Lower leg skin (tissue), 4 donors: ENCODE measurements at regions of chr5 and their contacts with region 1.

Region 1: GRCh38 chr5:14569948-14570711 is 11.5 kb upstream of the OTULINL start:
- DNase-seq: no peak
- H3K4me3 ChIP-seq: no peak overlapping the region
- CTCF ChIP-seq: no peak
- POLR2A ChIP-seq: no peak

Region 2: DNA sequence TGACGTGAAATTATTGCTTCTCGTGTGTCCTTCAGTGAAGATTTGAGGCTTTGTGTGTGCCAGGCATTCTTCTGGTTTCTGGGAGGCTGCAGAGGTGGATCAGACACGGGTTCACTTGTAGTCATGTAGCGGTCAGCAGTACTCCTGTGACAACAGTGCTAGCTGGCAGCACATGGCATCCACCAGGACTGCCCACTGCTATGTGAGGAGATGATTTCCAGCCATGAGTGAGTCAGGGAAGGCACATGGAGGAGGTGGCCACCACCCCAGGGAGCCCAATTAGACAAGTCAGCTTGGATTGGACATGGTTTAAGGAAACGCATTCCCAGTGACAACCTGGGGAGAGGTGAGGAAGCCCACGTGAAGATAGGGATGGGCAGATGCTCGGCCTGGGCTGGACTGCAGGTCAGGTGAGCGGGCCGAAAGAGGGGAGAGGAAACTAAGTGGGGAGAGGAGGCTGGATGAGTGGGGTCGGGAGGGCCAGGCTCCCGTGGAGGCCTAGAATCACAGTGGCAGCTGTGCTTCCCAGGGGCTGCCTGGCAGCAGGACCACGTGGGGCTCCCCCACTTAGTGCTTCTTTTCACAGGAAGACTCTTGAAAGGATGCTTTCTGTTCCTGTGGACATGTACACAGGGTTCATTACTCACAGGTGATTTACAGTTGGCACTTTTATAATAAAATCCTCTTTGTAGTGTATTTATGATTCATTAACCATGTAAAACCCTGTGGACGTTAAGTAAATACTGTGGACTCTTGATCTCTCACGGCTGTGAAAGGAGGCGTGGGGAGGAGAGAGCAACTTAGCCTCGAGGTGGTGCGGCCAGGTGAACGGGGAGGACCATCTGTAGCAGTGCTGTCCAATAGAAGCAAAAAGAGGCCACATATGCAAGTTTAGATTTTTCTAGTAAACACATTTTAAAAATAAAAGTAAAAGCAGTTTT is 68.5 kb before region 1 on chr5:
- intact Hi-C with region 1: loop called (anchors 2 kb)
- DNase-seq: peak in 1 of 2 donors; percentile 63
- H3K4me3 ChIP-seq: no peak overlapping the region
- CTCF ChIP-seq: no peak
- POLR2A ChIP-seq: no peak